ENCODE measurements at regions of chr13 and their contacts with region 1.

Region 1: GRCh38 chr13:47774671-47774994 is 226.4 kb downstream of the SUCLA2 start:
- DNase-seq: no peak
- H3K4me3 ChIP-seq: no peak overlapping the region
- H3K27ac ChIP-seq: no peak overlapping the region
- H3K27me3 ChIP-seq: no peaks in the 10 kb centered on the region
- CTCF ChIP-seq: no peak

Region 2: GRCh38 chr13:46831588-46832194 is 942.9 kb before region 1 on chr13:
- intact Hi-C with region 1: loop called (anchors 5 kb)
- DNase-seq: peak in 4 of 10 donors; percentile 14 to 58 (median 24)
- H3K4me3 ChIP-seq: no peak overlapping the region
- H3K27ac ChIP-seq: no peak overlapping the region
- H3K27me3 ChIP-seq: no peaks in the 10 kb centered on the region
- CTCF ChIP-seq: peak; percentile 69 to 95 (median 84)

Region 3: GRCh38 chr13:47723898-47724297 is 50.7 kb before region 1 on chr13:
- intact Hi-C with region 1: no loop called
- DNase-seq: no peak
- H3K4me3 ChIP-seq: no peak overlapping the region
- H3K27ac ChIP-seq: no peak overlapping the region
- H3K27me3 ChIP-seq: peaks cover 0 to 3% (median 0%) of the 10 kb centered on the region in 45 donors
- CTCF ChIP-seq: no peak

Measured in dorsolateral prefrontal cortex (tissue), 120 donors.